Activated CD4-positive, alpha-beta memory T cell treated with anti-CD3 and anti-CD28 coated beads, Interleukin-2, amount 10 ng/mL, durations not matched to agents 7 days and 5 days (primary cell): ENCODE measurements at regions of chr17 and their contacts with region 1.

Region 1: GRCh38 chr17:17403899-17404576 is 72.8 kb upstream of the MED9 start:
- DNase-seq: peak; percentile 66
- H3K4me3 Mint-ChIP-seq: peak overlapping the region; percentile 36
- H3K27ac Mint-ChIP-seq: peak overlapping the region; percentile 82
- H3K4me1 Mint-ChIP-seq: peaks cover 61% of the 10 kb centered on the region
- H3K27me3 Mint-ChIP-seq: no peaks in the 10 kb centered on the region

Region 2: DNA sequence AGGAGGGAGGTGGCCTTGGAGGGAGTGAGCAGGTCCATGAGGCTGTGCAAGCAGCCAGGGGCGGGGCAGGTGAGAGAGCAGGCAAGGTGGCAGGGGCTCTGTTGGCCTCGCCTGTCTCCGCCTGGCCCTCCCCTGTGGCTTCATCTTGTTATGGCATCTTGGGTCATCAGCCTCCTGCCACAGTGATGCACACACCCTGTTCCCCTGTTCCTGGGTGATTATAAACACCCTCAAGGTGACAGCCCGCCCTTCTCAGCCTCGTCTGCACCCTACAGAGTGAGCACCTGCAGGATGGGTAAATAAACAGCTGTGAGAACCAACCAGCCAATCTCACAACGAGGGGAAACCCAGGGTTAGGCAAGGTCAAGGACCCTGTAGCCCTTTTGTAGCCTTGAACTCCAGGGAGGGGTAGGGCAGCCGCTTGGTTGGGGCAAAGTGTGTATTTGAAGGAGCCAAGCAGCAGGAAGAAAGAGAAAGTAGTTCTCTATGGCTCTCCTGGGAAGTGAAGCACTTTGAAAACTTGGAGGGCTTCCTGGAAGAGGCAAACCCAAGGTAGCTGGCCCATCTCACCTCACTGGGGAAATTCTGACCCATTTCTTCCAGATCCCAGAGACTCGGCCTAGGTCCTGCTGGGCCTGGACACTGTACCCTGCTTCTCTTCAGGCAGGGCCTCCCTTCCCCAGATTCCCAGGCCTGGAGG is 40.2 kb before region 1 on chr17:
- CTCF ChIA-PET with region 1: no interaction called
- POLR2A ChIA-PET with region 1: no interaction called
- DNase-seq: no peak
- H3K4me3 Mint-ChIP-seq: no peak overlapping the region
- H3K27ac Mint-ChIP-seq: no peak overlapping the region
- H3K4me1 Mint-ChIP-seq: no peaks in the 10 kb centered on the region
- H3K27me3 Mint-ChIP-seq: peaks cover 21% of the 10 kb centered on the region

Region 3: GRCh38 chr17:17416007-17416399 is 12.0 kb after region 1 on chr17:
- CTCF ChIA-PET with region 1: no interaction called
- POLR2A ChIA-PET with region 1: interaction called, 19 read pairs
- DNase-seq: peak; percentile 57
- H3K4me3 Mint-ChIP-seq: no peak overlapping the region
- H3K27ac Mint-ChIP-seq: peak overlapping the region; percentile 80
- H3K4me1 Mint-ChIP-seq: peaks cover 40% of the 10 kb centered on the region
- H3K27me3 Mint-ChIP-seq: peaks cover 2% of the 10 kb centered on the region